PC-3 (cell line): ENCODE measurements at regions of chr21 and their contacts with region 1.

Region 1: DNA sequence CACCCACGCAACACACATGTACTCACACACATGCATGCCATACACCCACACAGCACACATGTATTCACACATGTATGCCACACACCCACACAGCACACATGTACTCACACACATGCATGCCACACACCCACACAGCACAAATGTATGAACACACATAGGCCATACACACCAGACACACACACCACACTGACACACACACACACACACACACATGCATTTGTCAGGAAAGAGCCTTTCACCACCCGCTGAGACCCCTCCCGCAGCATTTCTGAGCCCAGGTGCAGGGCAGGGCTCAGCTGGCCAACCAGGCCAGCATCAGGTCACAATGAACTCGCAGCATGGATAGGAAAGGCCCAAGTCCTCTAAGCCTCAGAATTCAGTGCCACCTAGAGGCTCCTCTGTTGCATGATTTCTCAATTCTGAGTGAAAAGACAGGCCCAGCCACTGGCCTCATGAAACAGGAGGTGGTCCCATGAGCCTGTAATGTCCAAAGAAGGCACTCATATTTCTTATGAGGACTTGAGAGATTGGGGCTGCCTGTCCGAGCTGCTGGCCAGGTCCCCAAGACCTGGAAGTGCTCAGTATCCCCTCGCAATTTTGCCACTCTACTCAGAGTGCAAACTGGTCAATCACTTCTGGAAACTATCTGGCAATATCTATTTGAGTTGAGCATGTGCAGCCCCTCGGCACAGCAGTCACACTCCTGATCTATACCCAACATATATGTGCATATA is 57.3 kb downstream of the PSMG1 start:
- DNase-seq: peak; percentile 83
- ATAC-seq: peak; percentile 95
- H3K4me3 ChIP-seq: no peak overlapping the region
- H3K27ac ChIP-seq: no peak overlapping the region
- H3K4me1 ChIP-seq: peaks cover 10% of the 10 kb centered on the region; the same call in 1 of the 2 replicates
- H3K27me3 ChIP-seq: no peaks in the 10 kb centered on the region
- CTCF ChIP-seq: peak; percentile 82

Region 2: DNA sequence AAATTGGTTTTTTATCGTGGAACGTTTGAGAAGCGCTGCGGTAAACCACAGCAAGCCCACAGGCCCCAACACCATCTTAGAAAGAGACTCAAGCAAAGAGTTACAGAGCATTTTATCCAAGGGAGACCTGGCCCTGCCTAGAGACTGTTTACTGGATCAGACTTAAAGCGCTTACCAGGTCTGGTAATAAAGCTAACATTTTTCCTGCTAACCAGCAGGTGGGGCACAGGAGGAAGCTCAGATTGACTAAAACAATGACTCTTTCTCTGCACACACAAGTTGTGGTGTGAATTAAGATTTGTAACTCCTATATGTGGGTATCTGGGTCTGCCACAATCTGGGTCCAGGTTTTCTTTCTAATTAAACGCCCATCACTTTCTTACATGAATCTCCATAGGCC is 456.7 kb before region 1 on chr21:
- CTCF ChIA-PET with region 1: interaction called, 6 read pairs
- POLR2A ChIA-PET with region 1: no interaction called
- intact Hi-C with region 1: loop called (anchors 2 kb)
- DNase-seq: peak; percentile 56
- ATAC-seq: peak; percentile 84
- H3K4me3 ChIP-seq: no peak overlapping the region
- H3K27ac ChIP-seq: no peak overlapping the region
- H3K4me1 ChIP-seq: no peaks in the 10 kb centered on the region
- H3K27me3 ChIP-seq: peaks cover 57% of the 10 kb centered on the region
- CTCF ChIP-seq: peak; percentile 75

Region 3: DNA sequence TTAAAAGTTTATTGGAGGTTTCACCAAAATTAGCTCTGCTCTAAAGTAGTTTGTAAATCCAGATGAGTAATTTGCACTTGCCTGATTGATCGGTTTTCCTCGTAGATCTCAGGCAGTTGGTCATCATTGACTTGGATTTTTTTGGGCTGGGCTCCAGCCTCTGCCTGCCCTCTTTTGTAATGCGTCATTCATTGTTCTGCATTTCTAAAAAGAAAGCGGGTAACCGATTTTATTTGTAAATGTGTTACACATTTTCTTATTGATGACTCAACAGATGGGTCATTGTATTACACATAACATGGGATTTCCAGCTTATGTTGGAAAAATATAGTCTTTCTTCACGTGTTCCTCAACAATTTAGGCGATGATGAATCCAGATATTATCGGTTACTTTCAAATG is 314.7 kb before region 1 on chr21:
- CTCF ChIA-PET with region 1: interaction called, 4 read pairs
- POLR2A ChIA-PET with region 1: interaction called, 4 read pairs
- intact Hi-C with region 1: loop called (anchors 2 kb)
- DNase-seq: peak; percentile 99
- ATAC-seq: peak; percentile 41
- H3K4me3 ChIP-seq: peak overlapping the region; percentile 25; the same call in 1 of the 2 replicates
- H3K27ac ChIP-seq: peak overlapping the region; percentile 98
- H3K4me1 ChIP-seq: peaks cover 76% of the 10 kb centered on the region
- H3K27me3 ChIP-seq: no peaks in the 10 kb centered on the region
- CTCF ChIP-seq: no peak

Region 4: DNA sequence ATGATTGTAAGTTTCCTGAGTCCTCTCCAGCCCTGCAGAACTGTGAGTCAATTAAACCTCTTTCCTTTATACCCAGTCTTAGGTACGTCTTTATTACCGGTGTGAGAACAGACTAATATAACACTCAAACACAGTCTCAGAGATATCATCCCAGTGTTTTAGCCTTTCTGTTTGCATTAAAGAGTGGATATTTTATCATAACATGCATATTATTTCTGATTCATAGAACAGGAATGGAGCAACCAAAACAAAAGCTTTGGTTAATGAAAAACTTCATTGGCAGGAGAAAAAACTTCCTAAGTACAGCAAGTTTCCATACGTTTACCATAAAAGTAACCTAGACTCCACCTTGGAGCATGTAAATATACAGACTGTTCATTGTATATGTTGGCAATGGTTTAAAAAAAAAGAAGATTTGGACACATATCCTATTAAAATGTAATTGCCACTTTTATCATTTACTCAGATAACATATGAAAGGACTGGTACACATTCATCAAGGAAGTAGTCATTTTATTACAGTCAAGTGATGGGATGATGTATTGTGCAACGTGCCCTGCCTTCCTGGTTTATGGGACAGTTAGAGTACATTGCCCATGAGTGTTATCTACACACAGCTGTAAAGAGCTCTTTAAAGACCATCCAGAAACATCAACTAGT is 175.4 kb before region 1 on chr21:
- CTCF ChIA-PET with region 1: interaction called, 3 read pairs
- POLR2A ChIA-PET with region 1: no interaction called
- intact Hi-C with region 1: loop called (anchors 1 kb)
- DNase-seq: peak; percentile 48
- ATAC-seq: peak; percentile 86
- H3K4me3 ChIP-seq: no peak overlapping the region
- H3K27ac ChIP-seq: no peak overlapping the region
- H3K4me1 ChIP-seq: no peaks in the 10 kb centered on the region
- H3K27me3 ChIP-seq: no peaks in the 10 kb centered on the region
- CTCF ChIP-seq: no peak

Region 5: DNA sequence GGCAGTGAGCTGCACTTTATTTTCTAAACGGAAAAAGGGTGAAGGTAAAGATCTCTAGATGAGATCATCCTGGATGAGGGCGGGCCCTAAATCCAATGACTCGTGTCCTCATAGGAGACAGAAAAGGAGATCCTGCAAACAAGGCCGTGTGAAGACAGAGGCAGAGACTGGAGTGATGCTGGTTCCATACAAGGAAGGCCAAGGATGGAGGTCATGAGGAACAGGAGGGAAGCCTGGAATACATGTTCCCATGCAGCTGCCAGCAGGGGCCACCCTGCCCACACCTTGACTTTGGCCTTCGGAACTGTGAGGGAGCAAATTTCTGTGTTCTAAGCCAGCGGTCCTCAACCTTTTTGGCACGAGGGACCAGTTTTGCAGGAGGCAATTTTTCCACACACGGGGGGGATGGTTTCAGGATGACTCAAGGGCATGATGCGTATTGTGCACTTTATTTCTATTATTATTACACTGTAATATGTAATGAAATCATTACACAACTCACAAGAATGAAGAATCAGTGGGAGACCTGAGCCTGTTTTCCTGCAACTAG is 37.0 kb before region 1 on chr21:
- CTCF ChIA-PET with region 1: no interaction called
- POLR2A ChIA-PET with region 1: no interaction called
- intact Hi-C with region 1: loop called (anchors 5 kb)
- DNase-seq: peak; percentile 66
- ATAC-seq: peak; percentile 86
- H3K4me3 ChIP-seq: no peak overlapping the region
- H3K27ac ChIP-seq: 0 out of 2 replicates have a peak overlapping the region, but pooled peaks have one; percentile 8
- H3K4me1 ChIP-seq: peaks cover 9% of the 10 kb centered on the region; the same call in 1 of the 2 replicates
- H3K27me3 ChIP-seq: no peaks in the 10 kb centered on the region
- CTCF ChIP-seq: peak; percentile 17; the same call in 1 of the 2 replicates

Region 6: DNA sequence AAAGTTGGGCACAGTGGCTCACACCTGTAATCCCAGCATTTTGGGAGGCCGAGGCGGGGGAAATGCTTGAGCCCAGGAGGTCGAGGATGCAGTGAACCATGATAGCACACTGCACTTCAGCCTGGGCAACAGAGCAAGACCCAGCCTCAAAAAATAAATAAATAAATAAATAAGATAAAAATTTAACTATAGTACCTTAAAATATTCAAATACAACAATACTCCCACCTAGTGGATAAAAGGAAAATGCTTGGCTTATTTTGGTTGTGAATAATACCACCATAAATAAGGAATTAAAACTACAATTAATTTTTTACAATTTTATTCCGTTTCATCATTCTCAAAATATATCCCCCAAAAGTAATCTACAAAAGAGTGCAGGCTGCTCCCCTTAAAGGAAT is 49.2 kb after region 1 on chr21:
- CTCF ChIA-PET with region 1: no interaction called
- POLR2A ChIA-PET with region 1: no interaction called
- intact Hi-C with region 1: no loop called
- DNase-seq: peak; percentile 63
- ATAC-seq: no peak
- H3K4me3 ChIP-seq: no peak overlapping the region
- H3K27ac ChIP-seq: no peak overlapping the region
- H3K4me1 ChIP-seq: no peaks in the 10 kb centered on the region
- H3K27me3 ChIP-seq: no peaks in the 10 kb centered on the region
- CTCF ChIP-seq: peak; percentile 45

Region 7: DNA sequence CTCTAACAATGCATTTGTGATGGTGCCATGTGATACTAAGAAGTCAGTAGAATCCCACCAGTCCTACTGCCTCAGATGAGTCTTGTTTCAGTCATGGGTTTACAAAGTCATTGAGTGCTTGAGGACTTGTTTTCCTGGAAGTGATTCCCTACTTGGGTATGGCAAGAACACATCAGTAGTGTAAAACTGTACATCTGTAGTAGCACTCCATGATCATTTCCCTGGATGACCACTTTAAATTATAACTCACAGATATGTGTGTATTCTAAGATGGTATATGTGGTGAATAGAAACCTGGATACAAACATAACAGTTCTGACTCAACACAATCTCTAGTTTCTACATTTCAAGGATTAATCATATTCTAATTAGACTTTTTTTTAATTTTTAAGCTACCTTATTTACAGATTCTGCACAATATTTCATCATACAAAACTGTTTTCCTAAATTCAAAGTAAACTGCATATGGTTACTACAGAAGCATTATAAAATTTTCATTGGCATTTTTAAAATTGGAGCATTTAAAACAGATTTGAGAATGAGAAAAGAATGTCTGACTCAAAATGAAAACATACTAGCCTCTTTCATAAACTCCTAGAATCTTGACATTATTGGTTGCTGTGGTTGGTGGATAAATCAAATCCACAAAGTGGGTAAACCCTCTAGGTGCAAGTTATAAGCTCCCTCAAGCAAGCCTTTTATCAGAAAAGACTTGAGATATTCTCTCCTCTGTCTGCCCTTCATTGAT is 64.1 kb after region 1 on chr21:
- CTCF ChIA-PET with region 1: no interaction called
- POLR2A ChIA-PET with region 1: no interaction called
- intact Hi-C with region 1: no loop called
- DNase-seq: no peak
- ATAC-seq: peak; percentile 50
- H3K4me3 ChIP-seq: no peak overlapping the region
- H3K27ac ChIP-seq: no peak overlapping the region
- H3K4me1 ChIP-seq: peaks cover 6% of the 10 kb centered on the region; the same call in 1 of the 2 replicates
- H3K27me3 ChIP-seq: no peaks in the 10 kb centered on the region
- CTCF ChIP-seq: no peak

Region 8: DNA sequence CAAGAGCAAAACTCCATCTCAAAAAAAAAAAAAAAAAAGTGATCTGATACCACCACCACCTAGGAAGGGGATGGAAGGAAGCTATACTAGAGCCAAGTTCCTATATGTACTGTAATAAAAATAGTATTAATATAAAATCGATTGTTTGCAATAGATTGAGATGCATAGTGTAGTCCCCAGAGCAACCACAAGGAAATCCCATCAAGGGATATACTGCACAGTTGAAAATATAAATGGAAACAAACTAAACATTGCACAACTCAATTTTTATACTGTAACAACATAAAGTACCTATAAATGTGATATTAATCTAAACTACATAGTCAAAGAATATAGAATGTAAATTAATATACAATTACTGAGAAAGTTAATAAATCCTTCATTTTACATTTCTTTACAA is 78.2 kb after region 1 on chr21:
- CTCF ChIA-PET with region 1: no interaction called
- POLR2A ChIA-PET with region 1: no interaction called
- intact Hi-C with region 1: no loop called
- DNase-seq: no peak
- ATAC-seq: peak; percentile 46
- H3K4me3 ChIP-seq: no peak overlapping the region
- H3K27ac ChIP-seq: no peak overlapping the region
- H3K4me1 ChIP-seq: no peaks in the 10 kb centered on the region
- H3K27me3 ChIP-seq: no peaks in the 10 kb centered on the region
- CTCF ChIP-seq: no peak